MCF 10A (cell line): ENCODE measurements at regions of chr16 and their contacts with region 1.

Region 1: GRCh38 chr16:16191493-16192167 is 31.7 kb downstream of the ABCC6 start:
- DNase-seq: no peak
- H3K4me3 Mint-ChIP-seq: no peak overlapping the region
- H3K27ac Mint-ChIP-seq: no peak overlapping the region
- H3K4me1 Mint-ChIP-seq: no peaks in the 10 kb centered on the region
- H3K27me3 Mint-ChIP-seq: peaks cover 14% of the 10 kb centered on the region
- CTCF ChIP-seq: no peak

Region 2: DNA sequence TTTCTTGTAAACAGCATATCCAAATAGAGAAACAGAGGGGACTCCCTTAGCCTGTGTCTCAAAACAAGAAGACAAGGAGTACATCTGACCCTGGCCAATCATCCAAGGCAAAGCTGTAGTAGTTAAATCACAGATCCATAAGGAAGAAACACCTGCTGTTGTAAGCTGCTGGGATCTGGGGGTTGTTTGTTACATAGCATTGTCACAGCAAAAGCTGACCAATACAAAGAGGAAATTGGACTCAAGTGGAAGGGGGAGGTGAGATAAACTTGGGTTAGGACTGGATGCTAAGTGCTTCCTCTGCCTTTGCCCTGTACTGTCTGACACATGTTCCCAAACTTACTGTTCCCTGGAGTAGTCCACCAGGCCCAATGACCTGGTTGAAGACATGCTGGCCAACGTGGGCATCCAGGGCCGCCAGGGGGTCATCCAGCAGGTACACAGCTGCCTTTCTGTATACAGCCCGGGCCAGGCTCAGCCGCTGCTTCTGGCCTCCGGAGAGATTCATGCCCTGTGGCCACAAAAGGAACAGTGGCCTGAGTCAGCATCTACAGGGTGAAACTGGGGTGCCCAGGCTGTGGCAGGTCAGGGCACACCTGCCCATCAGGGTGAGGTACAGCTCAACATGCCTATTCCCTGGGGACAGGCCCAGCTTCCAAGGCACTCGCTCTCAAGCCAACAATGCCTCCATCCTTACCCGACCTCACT is 13.0 kb before region 1 on chr16:
- CTCF ChIA-PET with region 1: interaction called, 11 read pairs
- POLR2A ChIA-PET with region 1: no interaction called
- intact Hi-C with region 1: no loop called
- DNase-seq: no peak
- H3K4me3 Mint-ChIP-seq: no peak overlapping the region
- H3K27ac Mint-ChIP-seq: no peak overlapping the region
- H3K4me1 Mint-ChIP-seq: no peaks in the 10 kb centered on the region
- H3K27me3 Mint-ChIP-seq: no peaks in the 10 kb centered on the region
- CTCF ChIP-seq: no peak